ENCODE measurements at regions of chr9 and their contacts with region 1.

Region 1: DNA sequence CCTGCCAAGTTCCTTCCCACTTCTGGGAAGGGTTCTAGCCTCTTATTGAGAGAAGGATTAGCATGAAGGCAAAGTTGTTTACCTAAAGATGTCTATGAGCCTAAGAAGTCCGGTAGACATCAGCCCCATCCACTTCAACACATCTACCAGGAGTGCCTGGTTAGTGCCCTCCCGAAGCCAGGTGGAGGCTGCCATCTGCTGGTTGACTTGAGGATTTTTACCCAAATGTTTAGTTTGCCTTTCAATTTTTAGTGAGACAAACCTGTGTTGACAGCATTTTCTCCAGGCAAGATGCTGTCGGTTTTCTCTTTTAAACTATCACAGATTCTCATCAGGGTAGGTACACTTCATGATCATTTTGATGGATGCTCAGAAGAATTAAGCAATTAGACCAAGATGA is 83.6 kb upstream of the TNFSF8 start:
- DNase-seq: peak; percentile 92
- H3K4me3 Mint-ChIP-seq: no peak overlapping the region
- H3K27ac Mint-ChIP-seq: peak overlapping the region; percentile 18
- H3K4me1 Mint-ChIP-seq: peaks cover 44% of the 10 kb centered on the region
- H3K27me3 Mint-ChIP-seq: no peaks in the 10 kb centered on the region

Region 2: DNA sequence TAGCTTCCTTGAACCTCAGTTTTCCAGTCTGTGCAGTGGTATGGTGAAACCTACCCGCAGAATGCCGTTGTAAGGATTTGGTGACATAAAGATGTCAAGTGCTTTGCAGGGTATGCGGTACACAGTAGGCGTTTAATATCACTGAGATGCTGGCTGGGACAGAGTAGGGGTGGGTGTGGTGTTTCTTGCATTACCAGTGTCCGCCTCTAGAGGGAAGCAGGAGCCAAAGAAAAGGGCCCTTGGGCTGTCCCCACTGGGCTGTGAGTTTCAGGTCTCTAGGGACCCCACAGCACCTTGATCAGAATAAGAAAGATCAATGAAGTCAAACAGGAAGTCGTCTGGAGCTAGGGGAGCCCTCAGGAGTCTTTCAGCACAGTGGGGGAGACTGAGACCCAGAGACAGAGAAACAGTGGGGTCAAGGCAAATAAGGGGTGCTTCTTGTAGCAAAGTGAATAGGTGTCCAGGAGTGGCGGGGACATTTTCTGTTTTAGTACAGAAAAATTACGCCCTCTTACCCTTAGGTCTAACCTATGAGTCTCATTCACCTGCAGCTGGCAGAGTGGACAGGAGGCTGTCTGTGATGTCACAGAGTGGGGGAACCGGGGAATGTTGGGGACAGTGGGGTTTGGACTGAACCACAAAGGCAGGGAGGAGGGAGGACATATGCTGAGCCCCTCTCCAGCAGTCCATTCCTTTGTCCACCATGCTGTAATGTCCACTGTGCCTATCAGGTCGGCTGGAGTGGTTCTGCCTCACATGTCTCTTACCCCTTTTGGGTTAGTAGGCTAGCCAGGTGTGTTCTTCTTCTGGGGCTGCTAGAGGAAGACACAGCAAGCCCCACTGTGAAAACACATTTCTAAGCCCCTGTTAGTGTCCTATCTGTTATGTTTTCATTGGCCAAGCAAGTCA is 351.7 kb before region 1 on chr9:
- CTCF ChIA-PET with region 1: interaction called, 6 read pairs
- intact Hi-C with region 1: loop called (anchors 1 kb)
- DNase-seq: peak; percentile 77
- H3K4me3 Mint-ChIP-seq: no peak overlapping the region
- H3K27ac Mint-ChIP-seq: no peak overlapping the region
- H3K4me1 Mint-ChIP-seq: peaks cover 14% of the 10 kb centered on the region
- H3K27me3 Mint-ChIP-seq: peaks cover 2% of the 10 kb centered on the region

Region 3: GRCh38 chr9:114738581-114739316 is 275.2 kb before region 1 on chr9:
- CTCF ChIA-PET with region 1: interaction called, 20 read pairs
- intact Hi-C with region 1: loop called (anchors 1 kb)
- DNase-seq: peak; percentile 82
- H3K4me3 Mint-ChIP-seq: no peak overlapping the region
- H3K27ac Mint-ChIP-seq: peak overlapping the region; percentile 86
- H3K4me1 Mint-ChIP-seq: peaks cover 56% of the 10 kb centered on the region
- H3K27me3 Mint-ChIP-seq: no peaks in the 10 kb centered on the region

Region 4: GRCh38 chr9:114830546-114830945 is 183.5 kb before region 1 on chr9:
- CTCF ChIA-PET with region 1: interaction called, 4 read pairs
- intact Hi-C with region 1: loop called (anchors 5 kb)
- DNase-seq: no peak
- H3K4me3 Mint-ChIP-seq: no peak overlapping the region
- H3K27ac Mint-ChIP-seq: no peak overlapping the region
- H3K4me1 Mint-ChIP-seq: peaks cover 16% of the 10 kb centered on the region
- H3K27me3 Mint-ChIP-seq: no peaks in the 10 kb centered on the region

Region 5: GRCh38 chr9:114880291-114880751 is 133.7 kb before region 1 on chr9:
- CTCF ChIA-PET with region 1: no interaction called
- intact Hi-C with region 1: no loop called
- DNase-seq: no peak
- H3K4me3 Mint-ChIP-seq: no peak overlapping the region
- H3K27ac Mint-ChIP-seq: no peak overlapping the region
- H3K4me1 Mint-ChIP-seq: peaks cover 17% of the 10 kb centered on the region
- H3K27me3 Mint-ChIP-seq: no peaks in the 10 kb centered on the region

Region 6: GRCh38 chr9:114906908-114907571 is 107.0 kb before region 1 on chr9:
- CTCF ChIA-PET with region 1: interaction called, 50 read pairs
- intact Hi-C with region 1: loop called (anchors 1 kb)
- DNase-seq: peak; percentile 46
- H3K4me3 Mint-ChIP-seq: no peak overlapping the region
- H3K27ac Mint-ChIP-seq: peak overlapping the region; percentile 98
- H3K4me1 Mint-ChIP-seq: peaks cover 54% of the 10 kb centered on the region
- H3K27me3 Mint-ChIP-seq: no peaks in the 10 kb centered on the region

Measured in activated naive CD4-positive, alpha-beta T cell treated with anti-CD3 and anti-CD28 coated beads for 36 hours (primary cell).